Activated naive CD4-positive, alpha-beta T cell treated with anti-CD3 and anti-CD28 coated beads, Interleukin-2, amount 10 ng/mL, durations not matched to agents 7 days and 5 days (primary cell): ENCODE measurements at regions of chr11 and their contacts with region 1.

Region 1: DNA sequence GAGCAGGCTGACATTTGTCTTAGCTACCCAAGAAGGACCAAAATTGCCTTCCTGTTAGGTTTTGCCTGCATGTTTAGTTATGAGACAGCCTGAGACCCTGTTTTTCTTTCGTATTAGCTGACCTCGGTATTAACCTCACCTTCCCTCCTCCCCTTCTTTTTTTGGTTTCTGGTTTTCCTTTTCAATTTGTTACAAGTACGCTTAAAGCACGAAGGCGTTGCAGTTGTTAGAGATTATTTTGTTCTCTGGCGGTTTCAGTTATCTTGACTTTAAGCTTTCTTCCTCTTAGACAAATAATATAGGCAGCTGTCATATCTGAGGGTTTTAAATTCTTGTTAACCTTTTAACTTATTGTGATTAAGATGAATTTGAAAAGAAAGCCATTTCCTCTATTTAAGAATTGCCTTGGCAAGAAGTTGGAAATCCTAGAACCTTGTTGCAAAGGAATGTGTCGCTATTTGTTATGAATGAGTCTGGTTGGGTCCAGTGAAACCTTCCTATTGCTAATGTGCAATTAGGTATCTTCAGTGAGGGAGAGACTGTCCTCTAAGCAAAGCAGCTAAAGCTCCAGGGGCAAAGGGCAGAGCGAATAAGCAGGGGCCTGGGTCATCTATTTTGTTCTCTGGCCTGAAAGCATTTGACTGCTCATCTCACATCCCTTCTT is 45.7 kb downstream of the PACS1 start:
- DNase-seq: peak; percentile 30
- H3K4me3 Mint-ChIP-seq: peak overlapping the region; percentile 48
- H3K27ac Mint-ChIP-seq: peak overlapping the region; percentile 90
- H3K4me1 Mint-ChIP-seq: peaks cover 87% of the 10 kb centered on the region
- H3K27me3 Mint-ChIP-seq: no peaks in the 10 kb centered on the region

Region 2: GRCh38 chr11:66126808-66127555 is 11.2 kb after region 1 on chr11:
- CTCF ChIA-PET with region 1: interaction called, 19 read pairs
- DNase-seq: peak; percentile 74
- H3K4me3 Mint-ChIP-seq: peak overlapping the region; percentile 62
- H3K27ac Mint-ChIP-seq: peak overlapping the region; percentile 97
- H3K4me1 Mint-ChIP-seq: peaks cover 64% of the 10 kb centered on the region
- H3K27me3 Mint-ChIP-seq: no peaks in the 10 kb centered on the region

Region 3: GRCh38 chr11:66228521-66228920 is 112.8 kb after region 1 on chr11:
- CTCF ChIA-PET with region 1: no interaction called
- DNase-seq: no peak
- H3K4me3 Mint-ChIP-seq: no peak overlapping the region
- H3K27ac Mint-ChIP-seq: no peak overlapping the region
- H3K4me1 Mint-ChIP-seq: peaks cover under 1% of the 10 kb centered on the region
- H3K27me3 Mint-ChIP-seq: no peaks in the 10 kb centered on the region